Psoas muscle (tissue), 8 donors: ENCODE measurements at regions of chr22 and their contacts with region 1.

Region 1: DNA sequence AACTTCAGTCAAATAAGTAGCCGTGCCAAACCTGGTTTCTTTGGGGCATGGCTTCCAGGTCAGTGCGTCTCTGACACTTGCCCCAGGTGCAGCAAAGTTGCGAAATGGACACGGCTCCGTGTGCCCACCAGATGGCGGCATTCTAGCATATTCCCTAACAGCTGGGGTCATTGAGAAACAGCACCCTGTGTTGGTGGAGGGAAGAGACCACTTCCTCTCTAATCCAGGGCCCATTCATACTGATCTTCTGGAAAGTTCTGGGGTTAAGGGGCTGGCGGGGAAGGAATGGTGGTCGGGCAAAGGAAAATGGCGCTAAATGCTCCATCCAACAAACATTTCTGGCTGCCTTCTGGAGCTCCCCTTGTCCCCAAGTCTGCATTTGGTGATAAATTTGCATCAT is 141.2 kb upstream of the TIMP3 start:
- DNase-seq: peak; percentile 65 to 73
- ATAC-seq: peak; percentile 56 to 80 (median 60)
- H3K4me3 ChIP-seq: no peak overlapping the region
- H3K27ac ChIP-seq: no peak overlapping the region
- H3K4me1 ChIP-seq: no peaks in the 10 kb centered on the region
- H3K27me3 ChIP-seq: no peaks in the 10 kb centered on the region
- CTCF ChIP-seq: peak; percentile 61

Region 2: GRCh38 chr22:32354360-32355351 is 305.6 kb before region 1 on chr22:
- intact Hi-C with region 1: no loop called
- DNase-seq: no peak
- ATAC-seq: no peak
- H3K4me3 ChIP-seq: no peak overlapping the region
- H3K27ac ChIP-seq: no peak overlapping the region
- H3K4me1 ChIP-seq: no peaks in the 10 kb centered on the region
- H3K27me3 ChIP-seq: no peaks in the 10 kb centered on the region
- CTCF ChIP-seq: no peak

Region 3: GRCh38 chr22:32695451-32695891 is 35.2 kb after region 1 on chr22:
- intact Hi-C with region 1: no loop called
- DNase-seq: no peak
- ATAC-seq: no peak
- H3K4me3 ChIP-seq: no peak overlapping the region
- H3K27ac ChIP-seq: no peak overlapping the region
- H3K4me1 ChIP-seq: no peaks in the 10 kb centered on the region
- H3K27me3 ChIP-seq: no peaks in the 10 kb centered on the region
- CTCF ChIP-seq: no peak

Region 4: GRCh38 chr22:32717337-32718240 is 57.3 kb after region 1 on chr22:
- intact Hi-C with region 1: no loop called
- DNase-seq: peak; percentile 30 to 60
- ATAC-seq: peak in 2 of 4 donors; percentile 54 to 72
- H3K4me3 ChIP-seq: no peak overlapping the region
- H3K27ac ChIP-seq: peak overlapping the region; percentile 58
- H3K4me1 ChIP-seq: no peaks in the 10 kb centered on the region
- H3K27me3 ChIP-seq: peaks cover 0 to 9% (median 0%) of the 10 kb centered on the region in 3 donors
- CTCF ChIP-seq: no peak

Region 5: GRCh38 chr22:32796865-32797573 is 136.7 kb after region 1 on chr22:
- intact Hi-C with region 1: loop called (anchors 2 to 10 kb)
- DNase-seq: peak; percentile 70 to 78
- ATAC-seq: peak; percentile 40 to 63 (median 60)
- H3K4me3 ChIP-seq: no peak overlapping the region
- H3K27ac ChIP-seq: no peak overlapping the region
- H3K4me1 ChIP-seq: no peaks in the 10 kb centered on the region
- H3K27me3 ChIP-seq: peaks cover 0 to 30% (median 1%) of the 10 kb centered on the region in 3 donors
- CTCF ChIP-seq: peak; percentile 53

Region 6: GRCh38 chr22:32985899-32986765 is 325.8 kb after region 1 on chr22:
- intact Hi-C with region 1: loop called (anchors 2 to 5 kb)
- DNase-seq: peak in 1 of 2 donors; percentile 30
- ATAC-seq: peak; percentile 82 to 97 (median 94)
- H3K4me3 ChIP-seq: no peak overlapping the region
- H3K27ac ChIP-seq: no peak overlapping the region
- H3K4me1 ChIP-seq: no peaks in the 10 kb centered on the region
- H3K27me3 ChIP-seq: peaks cover 0 to 6% (median 0%) of the 10 kb centered on the region in 3 donors
- CTCF ChIP-seq: peak; percentile 85

Region 7: DNA sequence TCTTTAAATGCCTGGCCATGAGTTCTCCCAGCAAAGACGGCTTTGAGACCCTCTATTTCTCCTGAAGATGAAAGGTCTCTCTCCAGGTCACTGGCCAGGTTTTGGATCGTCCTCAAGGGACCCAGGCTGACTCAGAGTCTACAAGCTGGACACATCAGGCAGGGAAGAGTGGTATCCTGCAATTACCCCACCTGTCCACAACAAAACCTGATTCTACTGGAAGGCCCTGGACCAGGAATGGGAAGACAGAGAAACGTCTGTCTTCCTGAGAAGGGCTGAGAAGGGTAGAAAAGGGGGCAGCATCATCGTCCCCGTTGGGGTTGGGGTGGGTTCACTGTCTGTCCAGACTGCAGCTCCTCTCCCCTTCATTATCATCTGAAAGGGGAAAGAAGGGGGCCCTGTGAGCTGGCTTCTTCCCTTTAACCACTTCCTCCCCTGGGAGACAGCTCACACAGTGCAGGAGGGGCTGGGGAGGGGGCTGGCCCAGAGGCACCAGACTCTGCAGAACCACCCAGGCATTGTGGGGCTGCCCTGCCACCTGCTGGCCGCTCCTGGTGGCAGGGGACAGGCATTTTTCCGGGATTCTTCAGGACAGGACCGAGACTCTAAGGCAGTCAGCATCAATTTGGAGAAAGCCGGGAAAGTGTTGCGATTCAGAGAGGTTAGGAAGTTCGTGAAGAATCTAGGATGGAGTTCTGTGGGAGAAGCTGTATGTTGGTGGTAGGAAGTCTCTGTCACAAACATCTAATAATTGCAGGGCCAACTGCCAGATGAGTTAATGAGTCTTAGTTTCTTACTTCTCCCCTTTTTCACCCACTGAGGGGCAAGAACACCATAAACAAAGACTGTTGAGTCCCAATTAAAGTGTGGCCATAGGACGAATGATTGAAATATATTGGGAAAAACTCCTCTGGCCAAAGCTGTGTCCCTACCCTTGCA is 340.3 kb after region 1 on chr22:
- intact Hi-C with region 1: loop called in 1 of 2 experiments (anchors 5 kb)
- DNase-seq: peak; percentile 71 to 77
- ATAC-seq: peak; percentile 49 to 73 (median 64)
- H3K4me3 ChIP-seq: no peak overlapping the region
- H3K27ac ChIP-seq: no peak overlapping the region
- H3K4me1 ChIP-seq: no peaks in the 10 kb centered on the region
- H3K27me3 ChIP-seq: peaks cover 0 to 18% (median 2%) of the 10 kb centered on the region in 3 donors
- CTCF ChIP-seq: peak; percentile 76

Region 8: DNA sequence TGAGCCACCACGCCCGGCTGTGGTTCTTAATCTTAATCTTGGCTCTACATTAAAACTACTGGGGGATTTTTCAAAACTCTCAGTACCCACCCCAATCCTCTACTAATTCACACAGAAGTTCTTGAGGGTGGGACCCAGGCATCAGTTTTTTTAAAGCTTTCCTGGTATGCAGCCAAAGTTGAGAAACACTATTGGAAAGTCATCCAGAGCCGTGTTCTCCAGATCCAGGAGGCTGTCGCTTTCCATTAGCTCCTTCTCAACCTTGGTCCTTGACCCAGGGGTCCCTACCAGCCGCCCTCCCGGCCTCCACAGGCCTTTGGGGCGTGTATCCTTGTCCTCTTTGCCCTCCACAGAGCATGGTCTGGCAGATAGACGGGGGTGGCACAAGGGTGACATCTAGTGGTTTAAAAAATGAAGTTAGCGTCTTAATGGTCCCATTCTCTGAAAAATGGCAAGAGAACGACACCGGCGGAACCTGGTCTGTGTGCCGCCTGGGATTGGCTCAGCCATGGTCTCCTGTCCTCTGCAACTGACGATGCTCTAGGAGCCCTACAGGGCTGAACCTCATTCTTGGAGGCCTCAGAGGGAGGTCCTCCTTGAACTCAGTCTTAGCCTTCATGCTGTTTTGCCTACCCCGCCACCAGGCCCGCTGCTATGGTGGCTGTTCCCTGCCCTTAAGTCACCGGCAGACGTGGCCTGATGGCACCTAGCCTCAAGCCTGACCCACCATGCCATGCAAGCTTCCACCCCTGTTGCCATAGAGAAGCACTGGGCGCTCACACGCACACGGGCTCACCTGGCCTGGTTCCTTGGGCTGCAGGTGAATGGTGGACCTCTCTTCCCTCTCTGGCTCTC is 549.9 kb after region 1 on chr22:
- intact Hi-C with region 1: loop called in 1 of 2 experiments (anchors 10 kb)
- DNase-seq: no peak
- ATAC-seq: peak in 1 of 4 donors; percentile 19
- H3K4me3 ChIP-seq: no peak overlapping the region
- H3K27ac ChIP-seq: no peak overlapping the region
- H3K4me1 ChIP-seq: no peaks in the 10 kb centered on the region
- H3K27me3 ChIP-seq: peaks cover 0 to 10% (median 3%) of the 10 kb centered on the region in 3 donors
- CTCF ChIP-seq: peak; percentile 34